CD4-positive, alpha-beta memory T cell (primary cell): ENCODE measurements at regions of chr3 and their contacts with region 1.

Region 1: DNA sequence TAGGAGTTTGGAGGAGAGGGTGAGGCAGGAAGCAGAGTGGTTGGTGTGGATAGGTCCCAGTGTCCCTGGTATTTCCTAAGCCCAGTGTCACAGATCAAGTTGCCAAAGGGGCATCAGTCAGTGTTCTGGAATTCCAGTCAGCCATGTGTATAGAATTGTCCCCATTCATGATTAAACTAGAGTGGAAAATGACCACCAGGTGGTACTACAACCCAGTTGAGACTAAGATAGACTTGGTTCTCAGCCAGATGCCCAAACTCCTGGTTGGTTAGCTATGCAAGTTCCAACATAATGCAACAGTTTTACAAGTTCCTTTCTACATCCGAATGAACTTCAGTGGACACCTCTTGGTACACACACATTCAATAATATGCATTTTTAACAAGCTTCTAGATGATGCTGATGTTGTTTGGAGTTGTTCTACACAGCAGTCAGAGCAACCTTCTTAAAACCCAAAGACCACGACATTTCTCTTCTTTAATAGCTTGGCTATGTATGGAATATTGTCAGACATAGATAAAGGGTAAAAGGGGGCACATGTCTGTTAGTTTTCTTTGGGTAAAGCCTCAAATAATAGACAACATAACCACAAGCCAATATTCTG is 8.4 kb upstream of the ATR start:
- DNase-seq: peak in 4 of 5 donors; percentile 39 to 53 (median 46)
- H3K4me3 ChIP-seq: no peak overlapping the region
- H3K4me3 Mint-ChIP-seq: no peak overlapping the region
- H3K27ac ChIP-seq: no peak overlapping the region
- H3K27ac Mint-ChIP-seq: no peak overlapping the region
- H3K4me1 ChIP-seq: no peaks in the 10 kb centered on the region
- H3K4me1 Mint-ChIP-seq: no peaks in the 10 kb centered on the region
- H3K27me3 ChIP-seq: no peaks in the 10 kb centered on the region
- H3K27me3 Mint-ChIP-seq: peaks cover 11 to 14% of the 10 kb centered on the region in 2 donors

Region 2: DNA sequence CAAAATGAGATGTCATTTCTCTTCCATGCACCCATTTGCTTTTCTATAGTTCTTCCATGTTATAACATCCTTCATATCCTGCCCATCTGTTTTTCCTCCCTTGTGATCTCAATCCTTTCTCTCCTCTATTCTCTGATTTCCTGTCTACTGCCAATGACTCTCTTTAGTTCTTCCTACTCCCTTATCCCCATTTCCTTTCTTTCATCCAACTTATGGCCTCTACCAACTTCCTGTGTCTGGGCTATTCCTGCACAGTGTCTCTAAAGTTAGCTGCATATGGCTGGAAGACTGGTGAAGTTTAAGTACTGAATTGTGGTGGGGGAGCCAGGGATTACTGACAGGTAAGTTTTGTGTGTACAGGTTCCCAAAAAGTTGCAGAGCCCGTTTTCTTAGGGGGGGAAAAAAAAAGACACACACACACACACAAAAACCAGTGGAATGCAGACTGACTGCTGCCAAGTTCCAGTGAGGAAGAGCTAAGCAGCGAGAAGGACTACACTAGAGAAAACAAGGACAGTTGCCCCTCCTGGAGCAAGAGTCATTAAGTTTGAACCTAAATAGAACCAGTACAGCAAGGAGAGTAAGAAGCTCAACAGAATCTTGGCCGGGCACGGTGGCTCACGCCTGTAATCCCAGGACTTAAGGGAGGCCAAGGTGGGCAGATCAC is 167.8 kb before region 1 on chr3:
- CTCF ChIA-PET with region 1: no interaction called
- POLR2A ChIA-PET with region 1: no interaction called
- intact Hi-C with region 1: no loop called
- DNase-seq: no peak
- H3K4me3 ChIP-seq: no peak overlapping the region
- H3K4me3 Mint-ChIP-seq: no peak overlapping the region
- H3K27ac ChIP-seq: no peak overlapping the region
- H3K27ac Mint-ChIP-seq: peak overlapping the region in 5 of 7 donors; percentile 7 to 84 (median 24)
- H3K4me1 ChIP-seq: no peaks in the 10 kb centered on the region
- H3K4me1 Mint-ChIP-seq: peaks cover 0 to 2% (median 0%) of the 10 kb centered on the region in 4 donors
- H3K27me3 ChIP-seq: no peaks in the 10 kb centered on the region
- H3K27me3 Mint-ChIP-seq: no peaks in the 10 kb centered on the region

Region 3: GRCh38 chr3:142553741-142554140 is 33.2 kb before region 1 on chr3:
- CTCF ChIA-PET with region 1: no interaction called
- POLR2A ChIA-PET with region 1: no interaction called
- intact Hi-C with region 1: no loop called
- DNase-seq: no peak
- H3K4me3 ChIP-seq: no peak overlapping the region
- H3K4me3 Mint-ChIP-seq: no peak overlapping the region
- H3K27ac ChIP-seq: no peak overlapping the region
- H3K27ac Mint-ChIP-seq: no peak overlapping the region
- H3K4me1 ChIP-seq: no peaks in the 10 kb centered on the region
- H3K4me1 Mint-ChIP-seq: peaks cover 0 to 2% (median 0%) of the 10 kb centered on the region in 4 donors
- H3K27me3 ChIP-seq: no peaks in the 10 kb centered on the region
- H3K27me3 Mint-ChIP-seq: no peaks in the 10 kb centered on the region

Region 4: GRCh38 chr3:142993958-142994442 is 407.1 kb after region 1 on chr3:
- CTCF ChIA-PET with region 1: interaction called, 25 read pairs
- POLR2A ChIA-PET with region 1: interaction called, 4 read pairs
- intact Hi-C with region 1: loop called (anchors 1 kb)
- DNase-seq: peak; percentile 53 to 61 (median 59)
- H3K4me3 ChIP-seq: no peak overlapping the region
- H3K4me3 Mint-ChIP-seq: no peak overlapping the region
- H3K27ac ChIP-seq: no peak overlapping the region
- H3K27ac Mint-ChIP-seq: no peak overlapping the region
- H3K4me1 ChIP-seq: no peaks in the 10 kb centered on the region
- H3K4me1 Mint-ChIP-seq: peaks cover 0 to 3% (median 0%) of the 10 kb centered on the region in 4 donors
- H3K27me3 ChIP-seq: no peaks in the 10 kb centered on the region
- H3K27me3 Mint-ChIP-seq: peaks cover 0 to 7% of the 10 kb centered on the region in 2 donors